Breast epithelium (tissue), 4 donors: ENCODE measurements at regions of chr22 and their contacts with region 1.

Region 1: DNA sequence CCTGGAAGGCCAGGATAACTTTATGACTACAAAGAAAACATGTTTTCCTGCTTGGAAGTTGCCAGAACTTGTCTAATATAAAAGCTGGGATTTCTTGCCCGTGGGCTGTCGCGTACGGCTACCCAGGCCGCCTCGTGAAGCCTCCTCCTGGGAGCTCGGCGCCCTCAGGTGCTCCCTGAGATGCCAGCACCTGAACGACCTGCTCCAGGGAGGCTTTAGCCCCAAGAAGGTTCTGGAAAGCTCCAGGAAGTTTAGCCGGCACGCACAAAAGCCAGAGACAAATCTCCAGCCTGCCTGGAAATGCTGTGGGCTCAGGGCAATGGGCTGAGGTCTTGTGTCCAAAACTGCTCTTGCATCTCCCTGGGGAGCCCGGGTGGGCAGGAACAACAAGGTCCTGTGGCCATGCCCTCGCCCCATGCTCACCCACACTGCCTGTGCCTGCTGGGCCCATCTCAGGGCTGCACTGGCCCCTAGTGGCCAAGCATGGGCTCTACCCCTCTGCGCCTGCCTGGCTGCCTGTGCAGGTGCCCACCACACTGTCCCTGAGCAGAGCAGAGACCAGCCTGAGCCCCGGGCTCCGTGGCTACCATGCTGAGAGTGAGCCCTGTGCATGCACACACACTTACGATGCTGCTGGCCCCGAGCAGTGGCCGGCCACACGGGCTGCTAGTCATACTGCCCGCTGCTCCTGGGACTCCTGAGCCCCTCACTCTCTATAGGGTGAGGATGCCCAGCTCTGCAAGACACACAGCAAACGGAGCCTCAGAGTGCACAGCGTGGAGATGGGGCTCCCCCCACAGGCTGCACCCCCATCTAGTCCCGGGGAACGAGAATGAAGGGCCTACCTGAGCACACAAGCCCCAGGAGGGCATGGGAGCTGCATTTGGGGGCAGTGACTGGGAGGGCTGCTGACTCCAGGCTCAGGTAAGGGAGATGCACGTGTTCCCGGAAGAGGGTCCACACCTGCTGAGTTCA is 4.9 kb upstream of the CELSR1 start:
- DNase-seq: peak in 1 of 2 donors; percentile 64
- H3K4me3 ChIP-seq: no peak overlapping the region
- H3K27ac ChIP-seq: peak overlapping the region; percentile 52 to 80
- H3K4me1 ChIP-seq: peaks cover 6 to 23% of the 10 kb centered on the region in 2 donors
- H3K27me3 ChIP-seq: no peaks in the 10 kb centered on the region
- CTCF ChIP-seq: peak; percentile 70 to 96 (median 92)
- POLR2A ChIP-seq: no peak

Region 2: DNA sequence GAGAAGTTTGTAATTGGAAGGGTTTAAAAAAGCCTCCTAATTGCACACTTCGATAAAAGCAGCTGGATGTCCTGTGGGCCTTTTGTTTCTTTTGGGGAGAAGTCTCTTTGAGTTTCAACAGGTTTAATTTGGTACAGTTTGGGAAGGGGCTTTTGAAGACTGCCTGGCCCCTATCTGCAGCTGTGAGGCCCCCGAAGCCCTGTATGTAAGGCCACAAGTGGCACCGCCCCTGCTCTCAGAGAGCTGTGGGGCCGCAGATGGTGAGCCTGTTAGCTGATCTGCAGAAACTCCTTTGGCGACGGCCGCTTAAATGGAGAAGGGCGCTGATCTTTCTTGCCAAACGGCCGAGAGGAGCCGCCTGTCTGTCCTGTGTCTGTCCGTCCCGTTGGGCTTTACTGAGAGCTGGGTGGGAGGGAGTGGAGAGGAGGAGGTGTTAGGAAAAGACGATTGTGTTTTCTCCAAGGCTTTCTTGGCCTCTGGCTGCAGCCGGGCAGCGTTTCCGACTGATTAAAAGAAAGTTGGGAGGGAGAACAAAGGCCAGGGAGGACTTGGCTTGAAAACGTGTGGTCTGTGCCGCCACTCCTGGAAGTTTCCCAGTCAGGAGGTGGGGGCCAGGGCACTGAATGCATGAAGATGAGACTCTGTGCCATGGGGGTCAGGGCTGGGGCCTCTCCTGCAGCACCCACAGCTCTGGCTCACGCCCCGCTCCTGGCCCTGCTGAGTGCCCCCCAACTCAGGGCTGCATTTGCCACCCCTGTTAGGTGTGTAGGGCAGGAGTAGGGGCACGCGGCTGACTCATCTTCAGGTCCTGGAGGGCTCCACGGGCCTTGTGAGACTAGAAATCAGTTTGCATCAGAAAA is 1037.3 kb before region 1 on chr22:
- intact Hi-C with region 1: loop called (anchors 5 kb)
- DNase-seq: no peak
- H3K4me3 ChIP-seq: peak overlapping the region; percentile 67 to 70 (median 70)
- H3K27ac ChIP-seq: peak overlapping the region; percentile 79 to 85
- H3K4me1 ChIP-seq: peaks cover 0 to 4% of the 10 kb centered on the region in 2 donors
- H3K27me3 ChIP-seq: peaks cover 0 to 11% of the 10 kb centered on the region in 2 donors
- CTCF ChIP-seq: no peak
- POLR2A ChIP-seq: no peak

Region 3: DNA sequence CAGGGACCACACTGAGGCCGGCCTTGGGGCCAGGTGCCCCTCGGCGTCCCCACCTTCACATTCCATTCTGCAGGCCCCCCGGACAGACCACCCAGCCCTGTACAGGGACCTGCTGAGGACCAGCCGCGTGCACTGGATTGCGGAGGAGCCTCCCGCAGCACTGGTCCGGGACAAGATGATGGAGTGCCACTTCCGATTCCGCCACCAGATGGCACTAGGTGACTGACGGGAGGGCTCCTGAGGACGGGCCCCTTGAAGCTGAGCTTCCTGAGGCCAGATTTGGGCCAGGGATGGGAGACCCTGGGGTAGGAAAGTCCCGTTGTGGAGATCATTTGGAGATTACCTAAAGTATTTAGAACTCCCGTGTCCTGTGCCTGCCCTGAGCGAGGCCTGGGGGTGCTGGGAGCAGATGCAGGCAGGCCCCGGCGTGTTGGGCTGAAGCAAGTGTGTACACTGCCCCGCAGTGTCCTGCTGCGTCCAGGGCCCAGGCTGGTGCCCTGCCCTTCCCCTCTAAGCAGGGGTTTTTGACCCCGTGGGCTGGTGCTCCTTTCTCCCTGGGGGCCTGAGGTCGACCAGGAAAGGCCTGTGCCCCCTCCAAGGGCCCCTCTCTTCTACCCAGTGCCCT is 186.8 kb before region 1 on chr22:
- intact Hi-C with region 1: loop called (anchors 10 kb)
- DNase-seq: peak; percentile 47 to 81
- H3K4me3 ChIP-seq: no peak overlapping the region
- H3K27ac ChIP-seq: no peak overlapping the region
- H3K4me1 ChIP-seq: no peaks in the 10 kb centered on the region
- H3K27me3 ChIP-seq: no peaks in the 10 kb centered on the region
- CTCF ChIP-seq: peak; percentile 43 to 75 (median 67)
- POLR2A ChIP-seq: no peak

Region 4: GRCh38 chr22:46491923-46492322 is 50.4 kb before region 1 on chr22:
- intact Hi-C with region 1: no loop called
- DNase-seq: peak; percentile 59 to 85
- H3K4me3 ChIP-seq: no peak overlapping the region
- H3K27ac ChIP-seq: peak overlapping the region; percentile 36 to 50
- H3K4me1 ChIP-seq: no peaks in the 10 kb centered on the region
- H3K27me3 ChIP-seq: no peaks in the 10 kb centered on the region
- CTCF ChIP-seq: no peak
- POLR2A ChIP-seq: no peak

Region 5: GRCh38 chr22:46561435-46561905 is 19.2 kb after region 1 on chr22:
- intact Hi-C with region 1: loop called (anchors 1 kb)
- DNase-seq: no peak
- H3K4me3 ChIP-seq: no peak overlapping the region
- H3K27ac ChIP-seq: no peak overlapping the region
- H3K4me1 ChIP-seq: peaks cover 0 to 9% of the 10 kb centered on the region in 2 donors
- H3K27me3 ChIP-seq: no peaks in the 10 kb centered on the region
- CTCF ChIP-seq: no peak
- POLR2A ChIP-seq: no peak

Region 6: GRCh38 chr22:48403521-48404403 is 1861.5 kb after region 1 on chr22:
- intact Hi-C with region 1: no loop called
- DNase-seq: no peak
- H3K4me3 ChIP-seq: no peak overlapping the region
- H3K27ac ChIP-seq: no peak overlapping the region
- H3K4me1 ChIP-seq: no peaks in the 10 kb centered on the region
- H3K27me3 ChIP-seq: peaks cover 0 to 25% of the 10 kb centered on the region in 2 donors
- CTCF ChIP-seq: no peak
- POLR2A ChIP-seq: no peak